Activated CD8-positive, alpha-beta T cell treated with anti-CD3 and anti-CD28 coated beads, Interleukin-2, amount 10 ng/mL, durations not matched to agents 7 days and 5 days (primary cell): ENCODE measurements at regions of chr12 and their contacts with region 1.

Region 1: DNA sequence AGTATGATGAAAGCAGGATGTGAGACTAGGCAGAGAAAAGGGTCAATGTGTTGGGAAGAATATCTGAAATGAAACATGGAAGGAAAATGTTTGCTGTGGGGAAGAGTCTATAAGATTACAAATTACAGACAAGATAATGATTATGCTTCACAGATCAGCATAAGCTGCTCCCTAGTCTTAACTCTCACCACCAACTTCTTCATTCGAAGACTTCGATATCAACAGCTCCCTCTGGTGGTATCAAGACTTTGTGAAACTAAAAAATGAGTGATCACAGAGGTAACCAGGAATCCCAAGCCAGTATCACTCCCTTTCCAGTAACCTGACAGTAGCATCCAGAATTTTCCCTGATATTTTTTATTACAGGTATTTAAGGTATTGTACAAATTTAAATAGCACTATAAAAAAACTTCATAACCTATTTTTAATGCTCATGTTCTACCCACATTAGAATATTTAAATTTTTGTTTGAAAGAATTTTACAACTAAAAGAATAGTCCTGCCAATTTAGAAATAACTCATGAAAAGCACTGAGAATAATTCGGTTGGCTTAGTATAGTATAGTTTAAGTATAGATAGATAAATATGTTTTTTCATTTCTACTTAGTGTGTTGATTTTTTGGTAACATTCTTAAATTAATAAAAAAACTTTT is 84.4 kb downstream of the C2CD5 start:
- DNase-seq: no peak
- ATAC-seq: peak; percentile 47
- H3K4me3 Mint-ChIP-seq: no peak overlapping the region
- H3K27ac Mint-ChIP-seq: no peak overlapping the region
- H3K4me1 Mint-ChIP-seq: no peaks in the 10 kb centered on the region
- H3K27me3 Mint-ChIP-seq: no peaks in the 10 kb centered on the region

Region 2: DNA sequence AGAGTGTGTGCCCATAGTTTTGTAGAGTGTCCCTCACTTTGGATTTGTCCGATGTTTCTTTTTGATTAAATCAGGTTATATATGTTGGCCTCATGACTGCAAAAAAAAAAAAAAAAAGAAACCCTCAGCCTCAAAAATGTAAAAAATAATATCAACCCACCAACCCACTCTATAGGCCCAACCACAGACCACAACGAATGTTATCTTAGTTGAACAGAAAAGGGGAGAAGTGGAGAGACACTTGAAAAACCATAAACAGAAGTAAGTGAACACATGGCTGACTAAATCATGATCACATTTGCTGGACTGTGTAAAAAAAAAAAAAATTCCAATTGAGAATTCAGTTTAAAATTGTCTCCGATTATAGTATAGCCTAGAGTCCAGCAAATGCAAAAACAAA is 79.9 kb before region 1 on chr12:
- CTCF ChIA-PET with region 1: no interaction called
- POLR2A ChIA-PET with region 1: no interaction called
- DNase-seq: no peak
- ATAC-seq: no peak
- H3K4me3 Mint-ChIP-seq: no peak overlapping the region
- H3K27ac Mint-ChIP-seq: no peak overlapping the region
- H3K4me1 Mint-ChIP-seq: no peaks in the 10 kb centered on the region
- H3K27me3 Mint-ChIP-seq: no peaks in the 10 kb centered on the region

Region 3: DNA sequence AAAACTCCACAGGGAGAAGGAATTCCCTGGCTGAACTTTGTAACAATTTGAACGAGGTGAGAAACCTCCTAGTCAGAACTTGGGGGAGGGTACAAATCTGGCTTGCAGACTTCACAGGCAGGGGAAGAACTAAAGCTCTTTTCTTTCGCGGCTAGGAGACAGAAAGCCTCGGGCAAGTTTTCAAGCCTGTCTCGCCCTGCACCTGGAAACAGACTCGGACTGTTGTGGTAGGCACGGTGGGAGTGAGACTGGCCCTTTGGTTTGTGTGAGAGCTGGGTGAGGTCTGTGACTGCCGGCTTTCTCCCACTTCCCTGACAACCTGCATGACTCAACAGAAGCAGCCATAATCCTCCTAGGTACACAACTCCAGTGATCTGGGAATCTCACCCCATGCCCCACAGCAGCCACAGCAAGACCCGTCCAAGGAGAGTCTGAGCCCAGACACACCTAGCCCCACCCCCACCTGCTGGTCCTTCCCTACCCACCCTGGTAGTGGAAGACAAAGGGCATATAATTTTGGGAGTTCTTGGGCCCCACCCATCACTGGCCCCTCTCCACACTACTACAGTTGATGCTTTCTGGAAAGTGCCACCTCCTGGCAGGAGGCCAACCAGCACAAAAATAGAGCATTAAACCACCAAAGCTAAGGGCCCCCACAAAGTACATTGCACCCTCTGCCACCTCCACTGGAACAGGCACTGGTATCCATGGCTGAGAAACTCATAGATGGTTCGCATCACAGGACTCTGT is 22.8 kb before region 1 on chr12:
- CTCF ChIA-PET with region 1: interaction called, 10 read pairs
- POLR2A ChIA-PET with region 1: no interaction called
- DNase-seq: no peak
- ATAC-seq: no peak
- H3K4me3 Mint-ChIP-seq: no peak overlapping the region
- H3K27ac Mint-ChIP-seq: no peak overlapping the region
- H3K4me1 Mint-ChIP-seq: no peaks in the 10 kb centered on the region
- H3K27me3 Mint-ChIP-seq: peaks cover 9% of the 10 kb centered on the region

Region 4: DNA sequence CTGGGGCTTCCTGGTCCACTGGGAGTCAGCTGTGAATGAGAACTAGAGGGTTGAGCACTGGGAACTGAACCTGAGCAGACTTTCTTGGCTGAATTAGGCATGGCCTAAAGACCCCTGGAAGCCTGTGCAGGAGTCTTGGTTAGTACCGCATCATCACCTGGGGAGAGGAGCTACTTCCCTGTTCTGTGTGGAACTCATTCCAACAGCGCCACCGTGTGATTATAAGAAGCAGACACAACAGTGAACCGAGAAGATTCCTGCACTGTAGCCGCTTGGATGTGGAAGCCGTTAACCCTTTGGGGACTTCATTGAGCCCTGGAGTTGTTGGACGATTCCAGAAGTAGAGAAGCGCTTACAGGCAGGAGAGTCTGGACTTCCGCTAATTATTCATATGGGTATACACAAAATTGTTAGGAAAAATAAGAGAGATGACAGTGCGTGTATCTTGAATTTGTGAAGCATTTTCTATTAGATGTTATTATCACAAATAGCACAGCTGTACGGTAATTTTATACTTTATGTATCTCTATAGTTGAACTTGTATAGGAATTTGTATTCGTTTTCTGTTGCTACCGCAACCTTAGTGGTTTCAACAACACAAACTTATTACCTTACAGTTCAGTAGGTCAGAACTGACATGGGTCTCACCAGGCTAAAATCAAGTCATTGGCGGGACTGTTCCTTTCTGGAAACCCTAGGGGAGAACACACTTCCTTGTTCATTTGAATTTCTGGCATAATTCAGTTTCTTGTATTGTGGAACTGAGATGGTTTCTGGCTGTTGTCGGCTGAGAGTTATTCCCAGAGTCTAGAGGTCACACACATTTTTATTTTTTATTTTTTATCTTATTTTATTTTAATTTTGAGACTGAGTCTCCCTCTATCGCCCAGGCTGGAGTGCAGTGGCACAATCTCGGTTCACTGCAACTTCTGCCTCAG is 16.3 kb before region 1 on chr12:
- CTCF ChIA-PET with region 1: interaction called, 13 read pairs
- POLR2A ChIA-PET with region 1: no interaction called
- DNase-seq: peak; percentile 70
- ATAC-seq: peak; percentile 99
- H3K4me3 Mint-ChIP-seq: no peak overlapping the region
- H3K27ac Mint-ChIP-seq: no peak overlapping the region
- H3K4me1 Mint-ChIP-seq: no peaks in the 10 kb centered on the region
- H3K27me3 Mint-ChIP-seq: peaks cover 9% of the 10 kb centered on the region

Region 5: GRCh38 chr12:22473212-22473611 is 13.2 kb after region 1 on chr12:
- CTCF ChIA-PET with region 1: interaction called, 23 read pairs
- POLR2A ChIA-PET with region 1: no interaction called
- DNase-seq: no peak
- ATAC-seq: no peak
- H3K4me3 Mint-ChIP-seq: no peak overlapping the region
- H3K27ac Mint-ChIP-seq: no peak overlapping the region
- H3K4me1 Mint-ChIP-seq: peaks cover 13% of the 10 kb centered on the region
- H3K27me3 Mint-ChIP-seq: no peaks in the 10 kb centered on the region